ENCODE measurements at regions of chr3 and their contacts with region 1.

Region 1: DNA sequence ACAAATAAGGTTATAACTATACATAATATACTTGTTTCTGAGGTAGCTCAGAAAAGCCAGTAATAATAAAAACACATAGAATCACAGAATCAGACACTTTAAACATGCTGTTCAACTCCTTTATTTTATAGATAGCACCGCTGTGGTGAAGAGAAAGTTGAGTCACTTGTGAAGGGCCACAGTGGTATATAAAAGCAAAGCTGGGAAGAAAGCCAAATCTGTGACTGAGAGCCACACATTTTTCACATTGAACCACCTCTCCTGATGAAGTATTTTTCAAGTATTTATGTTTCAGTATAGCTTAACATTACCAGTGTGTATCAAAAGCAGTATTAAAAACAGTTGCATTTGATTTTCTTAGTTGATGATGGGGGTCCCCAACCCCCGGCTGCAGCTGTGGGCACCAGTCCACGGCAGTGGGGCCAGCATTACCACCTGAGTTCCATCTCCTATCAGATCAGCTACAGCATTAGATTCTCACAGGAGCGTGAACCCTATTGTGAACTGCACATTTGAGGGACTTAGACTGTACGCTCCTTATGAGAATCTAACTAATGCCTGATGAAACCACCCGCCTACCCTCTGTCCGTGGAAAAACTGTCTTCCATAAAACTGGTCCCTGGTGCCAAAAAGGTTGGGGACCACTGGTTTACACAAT is 46.2 kb downstream of the TBL1XR1 start:
- DNase-seq: peak; percentile 83
- H3K4me3 ChIP-seq: peak overlapping the region in 1 of 3 experiments; percentile 8
- H3K27ac ChIP-seq: peak overlapping the region; percentile 64
- H3K4me1 ChIP-seq: peaks cover 21% of the 10 kb centered on the region
- H3K27me3 ChIP-seq: no peaks in the 10 kb centered on the region
- CTCF ChIP-seq: no peak

Region 2: DNA sequence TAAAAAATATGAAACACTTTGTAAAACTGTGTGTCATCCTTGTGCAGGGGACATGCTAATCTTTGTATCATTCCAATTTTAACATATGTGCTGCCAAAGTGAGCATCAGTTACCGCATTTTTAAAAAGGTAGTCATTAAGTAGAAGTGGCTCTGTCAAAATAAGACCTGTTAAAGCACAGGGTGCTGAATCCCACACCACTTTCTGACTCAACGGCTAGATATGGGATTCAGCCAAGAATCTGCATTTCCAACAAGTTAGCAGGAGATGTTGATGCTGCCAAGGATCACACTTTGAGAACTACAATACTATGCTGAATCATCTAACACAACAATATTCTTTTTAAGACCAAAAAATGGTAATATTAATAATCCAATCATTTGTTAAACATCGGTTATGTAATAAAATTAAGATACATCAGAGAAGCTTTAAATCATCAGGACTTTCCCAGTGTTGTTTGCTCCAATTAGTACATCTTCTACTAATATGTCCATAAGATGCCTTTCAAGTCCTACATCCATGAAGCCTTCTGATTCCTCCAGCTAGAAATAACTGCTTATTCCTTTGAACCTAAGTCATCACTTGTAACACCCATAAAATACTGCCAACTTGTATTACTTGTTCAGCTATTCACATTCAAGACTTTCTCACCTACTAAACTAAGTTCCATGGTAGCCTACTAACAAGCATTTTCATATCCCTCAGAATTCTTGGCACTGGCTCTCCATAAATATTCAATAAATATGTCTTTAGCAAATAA is 24.9 kb before region 1 on chr3:
- CTCF ChIA-PET with region 1: no interaction called
- dilution Hi-C with region 1: no loop called
- in situ Hi-C with region 1: no loop called
- intact Hi-C with region 1: loop called (anchors 2 kb)
- DNase-seq: peak; percentile 90
- H3K4me3 ChIP-seq: no peak overlapping the region
- H3K27ac ChIP-seq: no peak overlapping the region
- H3K4me1 ChIP-seq: peaks cover 21% of the 10 kb centered on the region
- H3K27me3 ChIP-seq: no peaks in the 10 kb centered on the region
- CTCF ChIP-seq: no peak

Measured in mammary epithelial cell (primary cell).